ENCODE measurements at regions of chr6 and their contacts with region 1.

Region 1: GRCh38 chr6:106227612-106228507 is 97.7 kb downstream of the ATG5 start:
- DNase-seq: no peak
- ATAC-seq: no peak
- H3K4me3 ChIP-seq: no peak overlapping the region
- H3K27ac ChIP-seq: no peak overlapping the region
- H3K4me1 ChIP-seq: no peaks in the 10 kb centered on the region
- H3K27me3 ChIP-seq: no peaks in the 10 kb centered on the region

Region 2: DNA sequence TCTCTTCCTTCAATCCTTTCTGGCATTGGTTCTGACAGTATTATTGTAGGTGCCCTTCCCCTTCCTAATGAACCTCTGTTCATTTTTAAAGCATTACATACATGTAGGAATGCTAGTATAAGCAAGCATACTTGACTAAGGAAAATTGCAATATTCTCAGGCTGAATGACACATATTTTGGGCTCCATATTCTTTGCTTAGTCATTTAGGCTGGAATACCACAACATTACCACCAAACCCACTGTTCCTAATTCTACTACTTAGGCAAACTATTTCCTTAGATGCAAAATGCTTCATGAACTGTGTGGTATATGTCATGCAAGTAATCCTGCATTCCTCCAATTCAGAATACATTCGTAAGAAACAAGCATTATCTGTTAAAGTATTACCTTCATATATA is 27.9 kb before region 1 on chr6:
- intact Hi-C with region 1: loop called in 1 of 2 experiments (anchors 2 kb)
- DNase-seq: no peak
- ATAC-seq: no peak
- H3K4me3 ChIP-seq: no peak overlapping the region
- H3K27ac ChIP-seq: no peak overlapping the region
- H3K4me1 ChIP-seq: no peaks in the 10 kb centered on the region
- H3K27me3 ChIP-seq: no peaks in the 10 kb centered on the region

Region 3: DNA sequence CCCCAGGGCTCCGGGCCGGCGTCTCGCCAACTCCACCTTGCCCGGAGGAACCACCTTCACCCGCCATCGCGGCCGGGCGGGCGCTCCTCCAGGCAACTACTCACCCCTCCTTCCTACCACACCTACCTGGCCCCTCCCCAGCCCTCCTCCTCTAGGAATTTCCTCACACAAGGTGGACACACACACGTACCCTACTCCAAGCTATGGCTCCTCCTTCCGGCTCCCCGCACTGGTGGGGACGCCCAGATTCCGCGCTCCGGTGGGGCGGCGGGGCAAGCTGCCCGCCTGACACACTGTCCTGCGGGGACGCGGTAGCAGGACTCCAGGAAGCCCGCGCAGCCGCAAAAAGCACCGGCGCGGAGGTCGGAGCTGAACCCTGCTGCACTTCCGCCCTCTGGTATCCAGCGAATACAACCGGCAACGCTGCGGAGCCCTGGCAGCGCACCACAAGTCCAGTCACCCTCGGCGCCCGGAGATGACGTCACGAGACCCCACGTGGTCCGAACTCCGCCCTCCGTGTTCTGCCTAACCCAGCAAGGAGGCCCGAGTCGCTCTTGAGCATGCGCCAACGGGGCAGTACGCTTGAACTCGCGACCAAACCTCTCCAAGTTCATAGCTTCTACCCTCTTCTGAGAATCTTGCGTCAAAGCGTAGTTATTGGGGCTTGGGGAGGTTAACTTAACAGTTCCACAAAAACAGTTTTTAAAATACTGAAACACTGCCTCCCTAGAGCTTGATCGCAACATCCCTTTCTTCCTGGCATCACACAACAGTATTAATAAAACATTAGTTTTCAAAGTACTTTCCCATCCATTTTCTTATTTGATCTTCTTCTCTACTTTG is 97.7 kb after region 1 on chr6 and contains the start of gene ATG5:
- intact Hi-C with region 1: no loop called
- DNase-seq: peak; percentile 100
- ATAC-seq: peak; percentile 99
- H3K4me3 ChIP-seq: peak within 1 kb of the TSS; percentile 37 to 74
- H3K27ac ChIP-seq: peak within 1 kb of the TSS in 1 of 2 donors; percentile 17
- H3K4me1 ChIP-seq: no peaks in the 10 kb centered on the region
- H3K27me3 ChIP-seq: no peaks in the 10 kb centered on the region
- total RNA-seq, gene ATG5: 27.7 to 30.3 TPM

Measured in aorta (tissue), 5 donors.